ENCODE measurements at regions of chr17 and their contacts with region 1.

Region 1: DNA sequence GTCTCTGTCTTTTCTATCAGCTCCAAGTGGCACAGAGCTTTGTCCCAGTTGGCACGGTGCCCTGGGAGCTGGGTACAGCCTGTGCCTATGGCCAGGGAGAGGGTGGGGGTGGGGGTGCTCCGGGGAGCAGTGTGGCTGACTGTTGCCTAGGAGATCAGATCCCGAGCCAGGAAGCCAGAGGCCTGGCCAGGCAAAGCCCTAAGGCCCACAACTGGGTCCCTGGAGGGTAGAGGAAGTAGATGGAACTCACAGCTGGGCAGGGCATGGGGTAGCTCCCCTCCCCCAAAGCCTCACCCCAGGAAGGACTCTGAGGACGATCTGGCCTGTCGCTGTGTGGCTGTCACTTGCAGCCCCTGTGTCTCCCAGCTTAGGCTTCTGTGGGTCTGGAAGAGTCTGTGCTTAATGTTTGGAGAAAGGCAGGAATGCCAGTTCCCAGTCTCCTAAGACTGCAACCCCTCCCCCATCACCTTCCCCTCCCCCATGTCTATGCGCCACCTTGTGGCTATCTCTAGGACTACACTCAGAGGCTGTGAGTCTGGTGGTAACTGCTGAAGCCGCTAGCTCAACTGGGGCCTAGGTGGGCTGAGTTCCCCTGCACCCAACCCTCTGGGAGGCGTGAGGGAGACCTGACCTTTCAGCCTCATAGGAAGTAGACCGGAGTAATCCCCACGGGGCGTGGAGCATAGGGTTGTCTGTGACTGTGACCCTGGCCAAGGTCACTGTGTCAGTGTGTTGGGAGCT is 12.6 kb downstream of the THRA start:
- DNase-seq: peak; percentile 95
- H3K4me3 ChIP-seq: peak overlapping the region in 2 of 4 donors; percentile 27 to 28
- H3K27ac ChIP-seq: peak overlapping the region; percentile 96 to 99 (median 98)
- H3K4me1 ChIP-seq: peaks cover 0 to 76% (median 72%) of the 10 kb centered on the region in 4 donors
- H3K27me3 ChIP-seq: no peaks in the 10 kb centered on the region
- CTCF ChIP-seq: peak; percentile 95 to 99 (median 98)
- EP300 ChIP-seq: peak in 2 of 4 donors; percentile 27 to 83
- POLR2A ChIP-seq: no peak

Region 2: GRCh38 chr17:40038882-40039513 is 36.4 kb before region 1 on chr17:
- intact Hi-C with region 1: loop called (anchors 5 kb)
- DNase-seq: peak; percentile 96
- H3K4me3 ChIP-seq: no peak overlapping the region
- H3K27ac ChIP-seq: peak overlapping the region; percentile 80 to 86 (median 84)
- H3K4me1 ChIP-seq: peaks cover 0 to 41% (median 35%) of the 10 kb centered on the region in 4 donors
- H3K27me3 ChIP-seq: no peaks in the 10 kb centered on the region
- CTCF ChIP-seq: peak; percentile 77 to 85 (median 83)
- EP300 ChIP-seq: peak; percentile 17 to 83 (median 70)
- POLR2A ChIP-seq: no peak

Region 3: DNA sequence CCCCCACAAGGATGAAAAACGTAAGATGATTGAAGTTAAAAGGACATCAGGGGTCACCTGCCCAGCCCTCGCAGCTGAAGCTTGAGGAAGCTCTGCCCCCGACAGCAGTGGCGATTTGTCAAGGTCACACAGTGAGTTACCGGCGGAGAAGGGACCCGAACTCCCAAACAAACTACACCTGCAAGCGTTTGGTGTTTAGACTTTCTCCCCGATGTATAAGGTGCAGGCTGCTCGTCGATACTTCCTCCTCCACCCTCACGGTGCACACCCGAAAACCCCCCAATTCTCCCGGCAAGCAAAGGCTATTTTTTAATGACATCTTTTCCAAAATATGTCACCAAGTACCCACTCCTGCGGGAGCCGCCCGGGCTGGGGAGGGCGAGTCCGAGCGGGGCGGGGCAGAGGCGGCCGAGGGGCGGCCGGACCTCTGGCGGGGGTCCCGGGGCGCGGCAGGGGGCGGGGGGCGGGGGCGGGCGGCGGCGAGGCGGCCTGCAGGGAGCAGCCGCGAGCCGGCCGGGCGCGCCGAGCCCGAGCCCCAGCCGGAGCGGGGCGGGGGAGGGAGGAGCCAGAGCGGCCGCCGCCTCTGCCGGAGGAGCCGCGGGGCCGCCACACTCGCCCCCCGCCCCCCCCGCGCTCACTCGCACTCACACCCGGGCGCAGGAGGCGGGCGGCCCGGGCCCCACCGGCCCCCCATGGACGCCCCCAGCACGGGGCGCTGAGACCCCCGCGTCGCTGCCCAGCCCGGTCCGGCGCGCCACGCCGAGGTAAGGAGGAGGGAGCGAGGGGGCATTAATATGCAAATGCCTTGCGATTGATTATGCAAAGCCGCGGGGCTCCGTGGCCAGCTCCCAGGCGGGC is 12.8 kb before region 1 on chr17 and contains the start of gene THRA:
- intact Hi-C with region 1: loop called (anchors 1 kb)
- DNase-seq: peak; percentile 88
- H3K4me3 ChIP-seq: peak within 1 kb of the TSS; percentile 87 to 98 (median 95)
- H3K27ac ChIP-seq: peak within 1 kb of the TSS; percentile 96 to 99 (median 98)
- H3K4me1 ChIP-seq: peaks cover 0 to 84% (median 64%) of the 10 kb centered on the region in 4 donors
- H3K27me3 ChIP-seq: no peaks in the 10 kb centered on the region
- CTCF ChIP-seq: peak in 1 of 4 experiments; percentile 22
- EP300 ChIP-seq: no peak
- POLR2A ChIP-seq: no peak
- total RNA-seq, gene THRA: 78.8 to 86.1 (median 83.8) TPM